ENCODE measurements at regions of chr10 and their contacts with region 1.

Region 1: DNA sequence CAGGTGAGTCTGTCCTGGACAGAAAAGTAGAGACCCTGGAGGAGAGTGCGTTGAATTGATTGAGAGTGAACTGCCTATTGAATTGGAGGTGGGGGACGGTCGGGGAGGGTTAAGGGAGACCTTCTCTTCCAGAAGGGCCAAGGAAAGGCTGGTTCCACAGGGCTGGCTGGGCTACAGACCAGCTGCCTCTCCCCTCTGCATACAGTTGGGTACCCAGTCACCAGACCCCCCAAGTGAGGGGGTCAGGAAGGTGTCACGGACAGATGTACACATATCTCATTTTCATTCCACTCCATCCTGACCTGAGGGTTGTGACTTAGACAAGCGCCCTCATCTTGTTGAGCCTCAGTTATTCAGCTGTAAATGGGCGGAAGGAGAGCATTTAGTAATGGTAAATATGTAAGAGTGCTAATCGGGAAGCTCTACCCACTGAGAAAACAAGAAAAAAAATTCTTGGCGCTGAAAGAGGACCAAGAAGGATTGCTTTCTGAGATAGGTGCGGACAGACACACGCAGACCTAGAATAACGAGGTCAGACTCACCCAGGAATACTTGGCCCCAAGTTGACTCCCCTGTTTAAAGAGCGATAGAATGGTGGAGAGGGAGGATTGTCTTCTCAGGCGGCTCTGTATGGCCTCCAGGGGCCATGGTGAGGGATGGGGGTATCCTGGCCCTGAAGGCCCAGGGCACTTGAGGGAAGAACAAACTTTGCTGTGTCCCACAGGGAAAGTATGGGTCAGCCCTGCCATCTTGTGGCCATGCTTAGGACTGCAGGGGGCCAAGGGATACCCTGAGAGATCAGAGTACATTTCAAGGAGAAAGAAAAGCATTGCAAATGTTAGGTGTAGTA is 7.2 kb upstream of the MBL2 start:
- DNase-seq: no peak
- H3K4me3 ChIP-seq: no peak overlapping the region
- CTCF ChIP-seq: peak; percentile 90

Region 2: DNA sequence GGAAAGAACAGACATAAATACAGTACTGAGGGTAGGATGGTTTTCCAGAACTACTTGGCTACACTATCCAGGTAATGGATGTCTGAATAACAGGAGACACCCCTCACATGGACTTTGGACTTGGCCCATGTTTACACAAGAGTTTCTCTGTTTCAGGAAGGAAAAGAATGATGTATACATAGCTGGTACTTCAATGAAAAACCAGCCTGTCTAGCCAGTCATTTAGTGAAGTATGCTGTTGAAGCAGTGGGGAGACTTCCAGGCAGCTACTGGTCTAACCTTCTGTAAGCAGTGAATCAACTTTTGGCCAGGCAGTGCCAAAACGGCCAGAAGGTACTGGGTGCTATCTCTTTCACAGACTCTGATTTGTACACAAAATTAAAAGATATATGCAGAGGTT is 142.2 kb before region 1 on chr10:
- CTCF ChIA-PET with region 1: interaction called, 135 read pairs
- POLR2A ChIA-PET with region 1: no interaction called
- DNase-seq: no peak
- H3K4me3 ChIP-seq: no peak overlapping the region
- CTCF ChIP-seq: no peak

Region 3: GRCh38 chr10:52755297-52756062 is 24.3 kb before region 1 on chr10:
- CTCF ChIA-PET with region 1: interaction called, 482 read pairs
- POLR2A ChIA-PET with region 1: no interaction called
- DNase-seq: peak; percentile 47
- H3K4me3 ChIP-seq: no peak overlapping the region
- CTCF ChIP-seq: no peak

Measured in AG04449 (cell line).